ENCODE measurements at regions of chr16 and their contacts with region 1.

Region 1: GRCh38 chr16:50210266-50211038 is 55.9 kb upstream of the ADCY7 start:
- DNase-seq: peak; percentile 75 to 85 (median 77)
- H3K4me3 ChIP-seq: no peak overlapping the region
- H3K27ac ChIP-seq: no peak overlapping the region
- H3K4me1 ChIP-seq: peaks cover 11% of the 10 kb centered on the region
- H3K27me3 ChIP-seq: no peaks in the 10 kb centered on the region
- CTCF ChIP-seq: peak; percentile 25 to 52 (median 48)
- EP300 ChIP-seq: no peak
- POLR2A ChIP-seq: no peak

Region 2: GRCh38 chr16:50024684-50025536 is 185.5 kb before region 1 on chr16 and contains the start of gene CNEP1R1:
- intact Hi-C with region 1: loop called in 2 of 4 experiments (anchors 5 to 10 kb)
- DNase-seq: peak; percentile 91 to 96 (median 94)
- H3K4me3 ChIP-seq: peak within 1 kb of the TSS; percentile 98
- H3K27ac ChIP-seq: peak within 1 kb of the TSS in 1 of 2 donors; percentile 73
- H3K4me1 ChIP-seq: peaks cover 4% of the 10 kb centered on the region
- H3K27me3 ChIP-seq: no peaks in the 10 kb centered on the region
- CTCF ChIP-seq: peak; percentile 99 to 100 (median 100)
- EP300 ChIP-seq: no peak
- POLR2A ChIP-seq: no peak
- total RNA-seq, gene CNEP1R1: 9.4 to 19.0 (median 13.3) TPM

Region 3: GRCh38 chr16:50152807-50153452 is 57.5 kb before region 1 on chr16 and contains the start of gene TENT4B:
- intact Hi-C with region 1: loop called in 2 of 4 experiments (anchors 5 to 10 kb)
- DNase-seq: peak; percentile 84 to 91 (median 89)
- H3K4me3 ChIP-seq: peak within 1 kb of the TSS; percentile 80
- H3K27ac ChIP-seq: peak within 1 kb of the TSS; percentile 76 to 99
- H3K4me1 ChIP-seq: peaks cover 6% of the 10 kb centered on the region
- H3K27me3 ChIP-seq: no peaks in the 10 kb centered on the region
- CTCF ChIP-seq: no peak
- EP300 ChIP-seq: no peak
- POLR2A ChIP-seq: peak; percentile 90
- total RNA-seq, gene TENT4B: 9.7 to 17.7 (median 12.3) TPM

Region 4: DNA sequence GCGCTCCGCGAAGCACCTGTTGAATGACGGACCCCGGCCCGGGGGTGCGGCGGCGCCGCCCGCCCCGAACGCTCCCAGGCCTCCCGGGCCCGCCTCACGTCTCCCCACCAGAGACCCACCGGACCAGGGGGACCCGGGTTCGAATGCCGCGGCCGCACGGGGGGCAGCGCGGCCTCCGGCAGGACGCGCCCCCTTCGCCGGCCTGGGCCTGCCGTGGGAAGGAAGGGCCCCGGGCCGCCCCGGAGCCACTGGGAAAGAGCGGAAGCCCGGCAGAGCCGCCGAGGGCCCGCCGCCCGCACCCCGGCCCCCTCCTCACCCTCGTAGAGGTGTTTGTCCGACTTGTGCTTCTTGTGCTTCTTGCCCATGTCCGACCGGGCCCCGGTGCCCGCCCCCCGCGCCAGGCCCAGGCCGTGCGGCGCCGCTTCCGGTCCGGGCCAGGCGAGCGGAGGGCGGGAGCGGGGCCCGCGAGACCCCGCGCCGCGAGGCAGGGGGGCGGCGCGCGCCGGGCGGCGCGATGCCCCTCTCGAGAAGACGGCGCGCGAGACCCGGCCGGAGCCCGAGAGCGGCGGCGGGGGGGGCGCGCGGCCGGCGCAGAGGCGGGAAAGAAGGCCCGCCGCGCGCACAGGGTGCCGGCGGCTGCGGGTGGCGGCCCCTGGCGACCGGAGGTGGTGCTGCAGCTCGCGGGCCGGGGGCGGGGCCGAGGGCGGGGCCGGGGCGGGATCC is 158.1 kb after region 1 on chr16 and contains the start of gene BRD7:
- intact Hi-C with region 1: loop called in 2 of 4 experiments (anchors 10 kb)
- DNase-seq: peak; percentile 58 to 87 (median 72)
- H3K4me3 ChIP-seq: peak within 1 kb of the TSS; percentile 77
- H3K27ac ChIP-seq: peak within 1 kb of the TSS in 1 of 2 donors; percentile 46
- H3K4me1 ChIP-seq: peaks cover 2% of the 10 kb centered on the region
- H3K27me3 ChIP-seq: no peaks in the 10 kb centered on the region
- CTCF ChIP-seq: peak in 2 of 3 donors; percentile 14 to 31
- EP300 ChIP-seq: no peak
- POLR2A ChIP-seq: no peak
- total RNA-seq, gene BRD7: 30.0 to 58.7 (median 53.5) TPM

Region 5: GRCh38 chr16:50665128-50665878 is 454.9 kb after region 1 on chr16:
- intact Hi-C with region 1: loop called in 2 of 4 experiments (anchors 10 kb)
- DNase-seq: peak; percentile 74 to 88 (median 85)
- H3K4me3 ChIP-seq: peak overlapping the region; percentile 38
- H3K27ac ChIP-seq: peak overlapping the region in 1 of 2 donors; percentile 55
- H3K4me1 ChIP-seq: peaks cover 1% of the 10 kb centered on the region
- H3K27me3 ChIP-seq: no peaks in the 10 kb centered on the region
- CTCF ChIP-seq: peak; percentile 60 to 82 (median 63)
- EP300 ChIP-seq: no peak
- POLR2A ChIP-seq: no peak